ENCODE measurements at regions of chr10 and their contacts with region 1.

Region 1: GRCh38 chr10:115956235-115957011 is 316.6 kb downstream of the GFRA1 start:
- DNase-seq: no peak
- ATAC-seq: no peak
- H3K4me3 ChIP-seq: no peak overlapping the region
- H3K27ac ChIP-seq: no peak overlapping the region
- H3K4me1 ChIP-seq: no peaks in the 10 kb centered on the region
- H3K27me3 ChIP-seq: no peaks in the 10 kb centered on the region
- CTCF ChIP-seq: no peak

Region 2: DNA sequence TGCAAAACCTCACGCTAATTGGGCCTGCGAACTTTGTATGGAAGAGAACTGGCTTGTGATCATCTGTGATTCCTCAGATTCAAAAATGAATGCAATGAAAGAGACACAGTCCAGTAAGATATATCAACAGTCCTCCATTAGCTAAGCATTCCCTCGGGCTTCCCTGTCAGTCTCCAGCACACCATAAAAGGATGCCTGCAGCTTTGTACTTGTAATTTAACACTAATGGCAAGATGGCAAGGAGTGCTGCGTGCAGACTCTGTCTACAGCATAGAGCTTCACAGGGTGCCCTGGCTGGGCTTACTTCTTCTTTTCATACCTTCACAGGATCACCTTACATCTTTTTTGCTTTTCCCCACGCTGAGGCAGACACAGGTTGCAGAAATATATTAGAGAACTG is 116.6 kb after region 1 on chr10:
- CTCF ChIA-PET with region 1: no interaction called
- POLR2A ChIA-PET with region 1: no interaction called
- in situ Hi-C with region 1: no loop called
- intact Hi-C with region 1: no loop called
- DNase-seq: no peak
- ATAC-seq: no peak
- H3K4me3 ChIP-seq: no peak overlapping the region
- H3K27ac ChIP-seq: no peak overlapping the region
- H3K4me1 ChIP-seq: no peaks in the 10 kb centered on the region
- H3K27me3 ChIP-seq: no peaks in the 10 kb centered on the region
- CTCF ChIP-seq: no peak

Region 3: GRCh38 chr10:116097239-116097784 is 140.9 kb after region 1 on chr10:
- CTCF ChIA-PET with region 1: no interaction called
- POLR2A ChIA-PET with region 1: no interaction called
- in situ Hi-C with region 1: no loop called
- intact Hi-C with region 1: no loop called
- DNase-seq: no peak
- ATAC-seq: no peak
- H3K4me3 ChIP-seq: no peak overlapping the region
- H3K27ac ChIP-seq: no peak overlapping the region
- H3K4me1 ChIP-seq: no peaks in the 10 kb centered on the region
- H3K27me3 ChIP-seq: peaks cover 15% of the 10 kb centered on the region
- CTCF ChIP-seq: no peak

Region 4: DNA sequence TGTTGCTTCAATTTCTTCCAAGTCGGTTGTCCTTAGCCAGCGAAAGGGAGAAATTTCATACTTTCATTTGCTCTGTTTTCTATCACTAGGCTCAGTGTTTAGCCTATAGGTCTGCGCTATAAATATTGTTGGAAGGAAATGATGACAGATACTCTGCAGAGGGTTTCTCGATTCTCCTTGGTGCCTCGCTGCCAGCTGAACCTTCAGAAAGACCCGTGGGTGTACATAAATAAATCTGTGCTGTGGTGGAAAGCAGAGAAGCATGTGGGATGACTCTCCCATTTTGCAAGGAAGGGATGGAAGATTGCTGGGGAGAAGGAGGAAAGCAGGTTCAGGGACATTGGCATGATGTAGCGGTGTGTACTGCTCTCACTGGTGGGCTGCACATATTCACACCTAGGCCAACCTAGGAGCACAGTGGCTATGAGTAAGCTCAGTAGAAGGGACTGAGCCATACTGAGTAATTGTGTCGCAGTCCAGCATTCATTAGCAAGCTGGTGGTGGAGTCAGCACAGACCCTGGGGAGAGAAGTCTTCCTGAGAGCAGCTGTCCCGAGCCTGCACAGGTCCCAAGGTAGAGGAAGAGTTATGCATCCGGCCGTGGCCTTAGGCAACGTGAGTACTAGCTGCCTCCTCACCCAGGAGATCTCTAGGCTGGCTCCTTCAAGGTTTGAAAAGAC is 521.7 kb after region 1 on chr10:
- CTCF ChIA-PET with region 1: no interaction called
- POLR2A ChIA-PET with region 1: interaction called, 12 read pairs
- in situ Hi-C with region 1: no loop called
- intact Hi-C with region 1: no loop called
- DNase-seq: no peak
- ATAC-seq: no peak
- H3K4me3 ChIP-seq: no peak overlapping the region
- H3K27ac ChIP-seq: no peak overlapping the region
- H3K4me1 ChIP-seq: no peaks in the 10 kb centered on the region
- H3K27me3 ChIP-seq: peaks cover 2% of the 10 kb centered on the region; the same call in 1 of the 2 replicates
- CTCF ChIP-seq: no peak